ENCODE measurements at regions of chr19 and their contacts with region 1.

Region 1: GRCh38 chr19:29873024-29873800 is 61.4 kb downstream of the CCNE1 start:
- DNase-seq: peak; percentile 76

Region 2: GRCh38 chr19:29610563-29611271 is 262.5 kb before region 1 on chr19:
- intact Hi-C with region 1: loop called (anchors 10 kb)
- DNase-seq: peak; percentile 84

Region 3: GRCh38 chr19:29731331-29731850 is 141.8 kb before region 1 on chr19:
- intact Hi-C with region 1: loop called (anchors 2 kb)
- DNase-seq: no peak

Region 4: DNA sequence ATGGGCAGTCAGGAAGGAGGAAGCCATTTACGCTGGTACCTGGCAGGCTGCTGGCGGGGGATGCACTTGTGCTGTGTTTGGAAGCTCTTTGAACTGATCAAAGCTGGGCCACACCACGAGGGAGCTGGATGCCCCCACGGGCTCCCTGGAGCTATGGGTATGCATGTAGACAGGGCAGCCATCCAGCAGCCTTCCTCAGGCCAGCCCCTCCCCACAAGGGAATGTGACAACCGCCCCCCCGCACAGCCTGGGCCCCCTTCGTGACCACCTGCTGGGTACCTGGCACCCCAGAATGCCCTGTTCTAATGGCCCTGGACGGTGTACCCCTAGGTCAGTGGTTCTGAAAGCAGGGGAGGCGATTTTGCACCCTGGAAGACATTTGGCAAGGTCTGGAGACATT is 115.7 kb before region 1 on chr19:
- intact Hi-C with region 1: loop called (anchors 5 kb)
- DNase-seq: no peak

Region 5: GRCh38 chr19:29771708-29772414 is 101.4 kb before region 1 on chr19:
- intact Hi-C with region 1: loop called (anchors 5 kb)
- DNase-seq: no peak

Region 6: DNA sequence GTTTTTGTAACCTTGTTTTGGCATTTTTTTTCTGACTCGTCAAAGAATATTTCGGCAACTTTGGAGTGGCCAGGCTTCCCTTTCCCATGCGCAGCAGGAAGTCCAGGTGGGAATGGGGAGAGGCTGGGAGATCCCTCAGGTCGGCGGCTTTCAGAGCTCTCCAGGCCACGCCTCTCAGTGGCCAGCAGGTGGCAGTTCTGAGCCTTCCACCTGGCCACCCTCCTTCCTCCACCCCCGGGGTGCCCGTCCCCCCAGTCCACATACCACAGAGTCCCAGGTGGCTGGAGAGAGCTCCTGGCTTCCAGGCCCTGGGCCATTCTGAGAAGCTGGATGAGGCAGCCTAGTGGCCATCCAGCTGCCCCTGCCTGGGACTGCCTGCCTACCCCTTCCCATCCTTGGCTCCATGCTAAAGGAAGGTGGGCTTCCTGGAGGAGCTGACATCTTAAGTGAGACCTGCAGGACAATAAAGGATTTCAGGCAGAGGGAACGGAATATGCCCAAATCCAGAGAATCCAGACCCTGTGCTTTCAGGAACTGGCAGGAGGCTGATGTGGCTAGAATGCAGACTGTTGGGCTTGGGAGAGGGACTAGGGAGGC is 15.1 kb before region 1 on chr19:
- intact Hi-C with region 1: no loop called
- DNase-seq: peak; percentile 71

Region 7: DNA sequence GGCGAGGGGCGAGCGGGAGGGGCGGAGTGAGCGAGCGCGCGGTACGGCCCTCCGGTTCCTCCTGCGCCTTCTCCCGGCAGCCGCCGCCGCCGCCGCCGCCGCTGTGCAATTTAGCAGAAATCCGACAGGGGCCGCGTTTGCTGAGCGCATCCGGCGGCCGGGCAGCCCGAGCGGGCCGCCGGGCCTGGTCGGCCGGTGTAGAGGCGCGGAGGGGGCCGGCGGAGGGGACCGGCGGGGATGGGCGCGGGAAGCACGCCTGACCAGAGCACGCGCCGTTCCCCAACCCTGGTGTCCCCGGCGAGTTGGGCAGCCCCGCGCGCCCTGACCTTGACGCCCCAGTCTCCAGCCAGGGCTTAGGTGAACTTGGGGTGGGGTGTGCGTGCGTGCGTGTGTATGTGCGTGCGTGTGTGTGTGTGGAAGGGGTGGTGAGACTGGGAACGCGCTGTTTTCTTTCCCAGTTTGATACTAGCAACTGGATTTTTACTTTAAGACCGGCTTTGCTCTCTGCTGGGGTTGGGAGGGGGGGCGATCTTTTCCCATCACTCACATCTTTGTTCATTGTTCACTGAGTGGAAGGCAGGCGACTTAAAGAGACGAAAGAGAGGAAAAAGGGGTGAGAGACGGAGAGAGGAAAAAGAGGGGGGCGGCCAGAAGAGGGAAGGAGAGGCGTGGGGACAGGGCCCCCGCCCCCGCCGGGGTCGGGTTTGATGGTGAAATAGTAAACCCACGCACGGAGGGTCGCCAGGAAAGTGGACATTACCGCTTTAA is 354.6 kb after region 1 on chr19:
- intact Hi-C with region 1: loop called (anchors 10 kb)
- DNase-seq: no peak

Measured in cardiac septum (tissue), 1 donor.